ENCODE measurements at regions of chr2 and their contacts with region 1.

Region 1: GRCh38 chr2:226835796-226836547 is at the start of gene RHBDD1:
- DNase-seq: peak; percentile 92
- H3K4me3 Mint-ChIP-seq: peak within 1 kb of the TSS; percentile 92
- H3K27ac Mint-ChIP-seq: peak within 1 kb of the TSS; percentile 98
- H3K4me1 Mint-ChIP-seq: peaks cover 50% of the 10 kb centered on the region
- H3K27me3 Mint-ChIP-seq: no peaks in the 10 kb centered on the region
- total RNA-seq, gene RHBDD1: 40.9 and 42.2 TPM in 2 replicates

Region 2: DNA sequence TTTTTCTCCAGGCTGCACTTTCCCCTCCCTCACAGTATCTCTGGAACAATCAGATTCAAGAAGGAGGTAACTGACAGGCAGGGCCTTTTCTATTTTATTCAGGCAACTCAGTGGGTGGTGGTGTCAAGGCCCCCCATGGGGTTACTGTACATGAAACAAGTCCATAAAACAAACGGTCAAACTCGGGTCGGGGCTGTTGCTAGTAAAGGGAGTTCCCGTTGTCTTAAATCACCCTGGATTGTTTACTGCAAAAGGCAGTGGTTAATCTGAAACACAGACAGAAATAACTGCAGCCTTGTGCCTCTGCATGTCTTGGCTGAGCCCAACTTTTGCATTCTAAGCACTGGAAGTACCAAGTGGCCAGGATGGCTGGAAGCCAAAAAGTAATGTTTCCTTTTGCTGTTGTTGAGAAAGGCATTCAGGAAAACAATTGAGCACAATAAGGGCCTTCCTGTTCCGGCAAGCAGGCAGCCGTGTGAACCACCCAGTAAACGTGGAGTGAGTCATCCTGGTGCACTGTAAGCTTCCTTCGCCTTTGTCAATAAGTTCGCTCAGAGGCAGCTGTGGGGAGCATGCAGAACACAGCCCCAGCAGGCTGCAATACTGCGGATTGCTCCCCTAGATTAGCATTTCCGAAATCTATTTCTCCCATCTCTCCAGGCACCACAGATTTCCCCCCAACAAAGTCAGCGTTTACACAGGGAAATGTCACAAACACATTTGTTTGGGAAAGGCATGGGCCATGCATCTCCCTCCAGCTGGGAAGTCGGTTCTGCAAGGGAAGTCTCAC is 185.9 kb before region 1 on chr2:
- intact Hi-C with region 1: loop called (anchors 5 kb)
- DNase-seq: peak; percentile 39
- H3K4me3 Mint-ChIP-seq: no peak overlapping the region
- H3K27ac Mint-ChIP-seq: peak overlapping the region; percentile 60
- H3K4me1 Mint-ChIP-seq: peaks cover 33% of the 10 kb centered on the region
- H3K27me3 Mint-ChIP-seq: no peaks in the 10 kb centered on the region

Region 3: DNA sequence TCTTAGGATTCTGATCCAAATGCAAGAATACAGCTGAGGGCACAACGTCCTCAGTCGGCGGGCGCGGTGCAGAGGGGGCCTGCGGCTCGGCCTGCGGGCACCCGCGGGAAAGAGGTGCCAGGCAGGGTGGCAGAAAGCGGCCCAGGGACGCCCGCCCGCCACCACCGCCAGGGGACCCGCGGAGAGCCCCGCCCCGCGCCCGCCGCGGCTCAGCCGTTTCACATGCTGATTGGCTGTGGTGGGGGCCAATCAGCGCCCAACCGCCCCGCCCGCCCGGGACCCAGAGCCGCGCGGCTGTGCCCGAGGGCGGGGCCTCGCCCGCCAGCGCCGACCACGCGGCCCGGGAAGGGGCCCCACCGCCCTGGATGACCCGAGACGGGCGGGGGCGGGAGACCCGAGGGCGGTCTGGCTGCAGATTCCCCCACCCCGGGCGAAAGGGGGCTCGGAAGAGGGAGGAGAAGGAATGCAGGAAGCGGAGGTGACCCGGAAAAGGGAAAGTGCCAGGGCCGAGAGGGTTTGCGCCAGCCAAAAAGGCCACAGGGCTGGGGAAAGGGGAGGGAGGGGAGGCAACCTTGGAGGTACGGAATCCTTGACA is 44.4 kb before region 1 on chr2:
- intact Hi-C with region 1: loop called (anchors 2 kb)
- DNase-seq: peak; percentile 86
- H3K4me3 Mint-ChIP-seq: peak overlapping the region; percentile 84
- H3K27ac Mint-ChIP-seq: peak overlapping the region; percentile 90
- H3K4me1 Mint-ChIP-seq: peaks cover 36% of the 10 kb centered on the region
- H3K27me3 Mint-ChIP-seq: peaks cover 6% of the 10 kb centered on the region

Region 4: GRCh38 chr2:226873051-226873620 is 37.2 kb after region 1 on chr2:
- intact Hi-C with region 1: loop called (anchors 2 kb)
- DNase-seq: no peak
- H3K4me3 Mint-ChIP-seq: no peak overlapping the region
- H3K27ac Mint-ChIP-seq: peak overlapping the region; percentile 68
- H3K4me1 Mint-ChIP-seq: peaks cover 22% of the 10 kb centered on the region
- H3K27me3 Mint-ChIP-seq: no peaks in the 10 kb centered on the region

Region 5: GRCh38 chr2:226903179-226903578 is 67.2 kb after region 1 on chr2:
- intact Hi-C with region 1: loop called (anchors 2 kb)
- DNase-seq: no peak
- H3K4me3 Mint-ChIP-seq: no peak overlapping the region
- H3K27ac Mint-ChIP-seq: no peak overlapping the region
- H3K4me1 Mint-ChIP-seq: peaks cover 22% of the 10 kb centered on the region
- H3K27me3 Mint-ChIP-seq: no peaks in the 10 kb centered on the region

Region 6: DNA sequence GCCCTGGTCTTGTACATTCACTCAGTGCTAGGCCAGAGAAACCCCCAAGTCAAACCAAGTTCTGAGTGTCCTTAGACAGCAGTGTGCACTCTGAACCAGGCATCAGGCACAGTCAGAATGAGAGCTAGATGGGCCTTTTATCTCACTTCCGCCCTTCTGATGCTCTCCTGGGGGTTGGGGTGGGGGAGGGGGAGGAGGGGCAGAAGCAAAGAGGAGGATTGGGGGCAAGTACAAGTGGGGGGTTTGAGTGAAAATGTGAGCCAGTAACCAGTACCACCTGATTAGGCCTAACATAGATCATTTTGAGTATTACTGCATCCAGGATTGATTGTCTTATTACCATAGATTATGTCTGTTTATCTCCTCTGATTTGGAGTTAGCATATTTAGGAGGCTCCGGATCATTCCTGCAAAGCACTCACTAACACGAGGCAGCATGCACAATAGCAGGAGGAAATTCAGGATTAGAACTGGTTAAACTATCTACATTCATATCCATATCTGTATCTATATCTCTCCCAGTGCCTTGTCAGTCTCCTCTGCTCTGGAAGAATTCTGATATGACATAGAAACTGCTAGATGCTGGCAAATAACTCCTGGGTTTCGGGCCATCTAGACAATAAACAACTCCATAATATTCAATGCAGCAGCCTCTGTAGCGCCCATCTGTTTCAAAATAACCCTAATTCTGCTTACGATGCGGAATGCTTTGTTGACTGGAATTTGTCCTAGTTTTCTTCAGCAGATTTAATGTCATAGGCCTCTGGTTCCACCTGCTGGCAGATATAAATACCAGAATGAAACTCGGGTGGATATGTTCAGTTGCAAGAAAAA is 149.0 kb after region 1 on chr2:
- intact Hi-C with region 1: loop called (anchors 2 kb)
- DNase-seq: peak; percentile 30
- H3K4me3 Mint-ChIP-seq: no peak overlapping the region
- H3K27ac Mint-ChIP-seq: no peak overlapping the region
- H3K4me1 Mint-ChIP-seq: peaks cover 23% of the 10 kb centered on the region
- H3K27me3 Mint-ChIP-seq: no peaks in the 10 kb centered on the region

Region 7: DNA sequence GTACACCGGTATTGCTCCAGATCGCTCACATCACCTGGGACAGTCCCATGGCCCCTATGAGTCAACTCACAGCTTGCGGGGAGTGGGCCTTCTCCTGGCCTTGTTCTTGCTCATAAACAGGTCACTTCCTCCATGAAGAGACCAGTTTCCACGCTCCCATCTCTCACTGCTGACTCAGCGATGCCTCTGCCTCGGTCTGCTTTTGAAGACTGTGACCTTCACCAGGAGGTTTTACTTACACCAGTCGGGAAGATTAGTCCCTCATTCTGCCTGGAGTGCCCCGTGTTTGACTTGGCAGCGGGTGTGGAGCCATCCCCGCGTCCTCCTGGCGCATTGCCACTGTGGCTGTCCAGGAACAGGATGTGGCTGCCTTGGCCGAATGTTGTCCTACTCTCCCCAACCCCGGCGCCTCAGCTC is 159.7 kb after region 1 on chr2:
- intact Hi-C with region 1: loop called (anchors 5 kb)
- DNase-seq: no peak
- H3K4me3 Mint-ChIP-seq: no peak overlapping the region
- H3K27ac Mint-ChIP-seq: no peak overlapping the region
- H3K4me1 Mint-ChIP-seq: peaks cover 16% of the 10 kb centered on the region
- H3K27me3 Mint-ChIP-seq: no peaks in the 10 kb centered on the region

Measured in activated T-helper 2 cell treated with anti-CD3 and anti-CD28 coated beads, Interferon-gamma antibody, Interleukin-2, Interleukin-4, amounts not matched to agents 10 μg/mL and 5 μg/mL and 100 μg/mL, durations not matched to agents 14 hours and 24 hours and 36 hours (primary cell).